CD8-positive, alpha-beta T cell (primary cell): ENCODE measurements at regions of chr6 and their contacts with region 1.

Region 1: DNA sequence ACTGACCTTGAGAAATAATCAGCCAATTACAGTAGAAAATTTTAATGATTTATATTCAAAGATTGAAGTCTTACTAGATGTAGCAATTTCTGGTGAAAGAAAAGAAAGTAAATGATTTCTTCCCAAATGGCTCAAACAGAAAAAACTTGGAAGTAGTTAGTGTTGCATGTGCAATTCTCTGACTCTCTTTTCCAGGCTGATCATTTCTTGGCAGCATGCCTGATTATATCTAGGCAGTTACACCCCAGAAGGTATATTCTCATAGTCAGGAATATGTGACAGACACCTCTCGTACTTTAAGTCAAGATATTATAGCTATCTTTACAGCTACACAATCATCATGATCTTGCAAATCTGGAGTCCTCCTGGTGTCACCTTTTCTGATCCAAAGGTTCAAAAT is 122.9 kb downstream of the PDE7B start:
- DNase-seq: no peak
- ATAC-seq: no peak
- H3K4me3 ChIP-seq: no peak overlapping the region
- H3K4me3 Mint-ChIP-seq: no peak overlapping the region
- H3K27ac ChIP-seq: no peak overlapping the region
- H3K27ac Mint-ChIP-seq: no peak overlapping the region
- H3K4me1 ChIP-seq: no peaks in the 10 kb centered on the region
- H3K4me1 Mint-ChIP-seq: no peaks in the 10 kb centered on the region
- H3K27me3 ChIP-seq: no peaks in the 10 kb centered on the region
- H3K27me3 Mint-ChIP-seq: no peaks in the 10 kb centered on the region
- CTCF ChIP-seq: no peak

Region 2: GRCh38 chr6:134145786-134146185 is 1828.6 kb before region 1 on chr6:
- CTCF ChIA-PET with region 1: no interaction called
- POLR2A ChIA-PET with region 1: no interaction called
- intact Hi-C with region 1: no loop called
- DNase-seq: no peak
- ATAC-seq: no peak
- H3K4me3 ChIP-seq: no peak overlapping the region
- H3K4me3 Mint-ChIP-seq: no peak overlapping the region
- H3K27ac ChIP-seq: no peak overlapping the region
- H3K27ac Mint-ChIP-seq: no peak overlapping the region
- H3K4me1 ChIP-seq: no peaks in the 10 kb centered on the region
- H3K4me1 Mint-ChIP-seq: no peaks in the 10 kb centered on the region
- H3K27me3 ChIP-seq: no peaks in the 10 kb centered on the region
- H3K27me3 Mint-ChIP-seq: no peaks in the 10 kb centered on the region
- CTCF ChIP-seq: no peak

Region 3: DNA sequence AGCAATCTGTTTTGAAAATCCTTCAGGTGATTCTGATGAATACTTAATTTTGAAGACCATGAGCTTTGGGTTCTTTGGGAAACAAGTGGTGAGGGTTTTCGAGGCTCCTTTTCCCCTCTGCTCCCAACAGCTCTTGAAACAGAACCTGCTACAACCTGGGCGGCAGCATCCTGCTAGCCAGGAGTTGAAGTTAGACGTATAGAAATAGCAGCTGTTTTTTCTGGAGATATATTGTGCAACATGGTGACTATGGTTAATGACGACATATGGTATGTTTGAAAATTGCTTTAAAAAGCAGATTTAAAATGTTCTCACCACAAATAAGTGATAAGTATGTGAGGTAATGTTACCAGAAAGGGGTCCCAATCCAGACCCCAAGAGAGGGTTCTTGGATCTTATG is 16.0 kb after region 1 on chr6:
- CTCF ChIA-PET with region 1: no interaction called
- POLR2A ChIA-PET with region 1: interaction called, 3 read pairs
- intact Hi-C with region 1: loop called in 1 of 2 experiments (anchors 2 kb)
- DNase-seq: no peak
- ATAC-seq: no peak
- H3K4me3 ChIP-seq: no peak overlapping the region
- H3K4me3 Mint-ChIP-seq: no peak overlapping the region
- H3K27ac ChIP-seq: no peak overlapping the region
- H3K27ac Mint-ChIP-seq: no peak overlapping the region
- H3K4me1 ChIP-seq: no peaks in the 10 kb centered on the region
- H3K4me1 Mint-ChIP-seq: no peaks in the 10 kb centered on the region
- H3K27me3 ChIP-seq: no peaks in the 10 kb centered on the region
- H3K27me3 Mint-ChIP-seq: no peaks in the 10 kb centered on the region
- CTCF ChIP-seq: no peak